ENCODE measurements at regions of chr9 and their contacts with region 1.

Region 1: DNA sequence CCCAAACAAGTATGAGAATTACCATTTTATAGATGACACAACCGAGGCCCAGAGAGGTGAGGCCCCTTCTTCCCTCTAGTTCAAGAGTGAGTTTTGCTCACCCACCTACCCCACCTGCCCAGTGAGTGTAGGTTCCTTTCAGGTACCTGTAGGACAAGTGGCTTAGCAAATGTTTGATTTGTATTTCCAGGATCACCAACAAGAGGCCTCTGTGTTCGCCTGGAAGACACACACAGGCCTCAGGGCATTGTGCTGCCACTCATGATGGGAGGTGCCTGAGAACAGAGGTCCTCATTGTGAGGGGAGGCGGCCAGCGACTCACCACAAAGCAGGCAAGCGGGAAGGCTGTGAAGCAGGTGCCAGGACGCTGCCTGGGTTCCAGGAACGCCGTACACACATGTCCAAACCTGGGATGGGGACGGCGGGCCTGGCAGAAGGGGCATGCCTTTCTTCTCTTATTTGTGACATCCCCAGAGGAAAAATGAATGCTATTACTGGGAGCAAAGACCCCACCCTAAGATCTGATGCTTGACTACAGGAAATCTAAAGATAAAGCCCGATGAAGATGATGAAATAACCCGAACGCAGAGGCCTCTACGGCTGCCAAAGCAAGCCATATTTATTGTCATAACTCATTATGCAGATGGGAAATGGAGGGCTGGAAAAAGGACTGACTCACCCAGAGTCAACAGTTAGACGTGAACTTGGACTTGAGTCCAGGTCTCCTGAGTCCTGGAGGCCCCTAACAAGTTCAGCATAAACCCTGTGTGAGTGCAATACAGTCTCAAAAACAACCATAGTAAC is 60.2 kb upstream of the SLC25A51 start:
- DNase-seq: peak; percentile 92
- H3K4me3 ChIP-seq: no peak overlapping the region
- CTCF ChIP-seq: no peak

Region 2: DNA sequence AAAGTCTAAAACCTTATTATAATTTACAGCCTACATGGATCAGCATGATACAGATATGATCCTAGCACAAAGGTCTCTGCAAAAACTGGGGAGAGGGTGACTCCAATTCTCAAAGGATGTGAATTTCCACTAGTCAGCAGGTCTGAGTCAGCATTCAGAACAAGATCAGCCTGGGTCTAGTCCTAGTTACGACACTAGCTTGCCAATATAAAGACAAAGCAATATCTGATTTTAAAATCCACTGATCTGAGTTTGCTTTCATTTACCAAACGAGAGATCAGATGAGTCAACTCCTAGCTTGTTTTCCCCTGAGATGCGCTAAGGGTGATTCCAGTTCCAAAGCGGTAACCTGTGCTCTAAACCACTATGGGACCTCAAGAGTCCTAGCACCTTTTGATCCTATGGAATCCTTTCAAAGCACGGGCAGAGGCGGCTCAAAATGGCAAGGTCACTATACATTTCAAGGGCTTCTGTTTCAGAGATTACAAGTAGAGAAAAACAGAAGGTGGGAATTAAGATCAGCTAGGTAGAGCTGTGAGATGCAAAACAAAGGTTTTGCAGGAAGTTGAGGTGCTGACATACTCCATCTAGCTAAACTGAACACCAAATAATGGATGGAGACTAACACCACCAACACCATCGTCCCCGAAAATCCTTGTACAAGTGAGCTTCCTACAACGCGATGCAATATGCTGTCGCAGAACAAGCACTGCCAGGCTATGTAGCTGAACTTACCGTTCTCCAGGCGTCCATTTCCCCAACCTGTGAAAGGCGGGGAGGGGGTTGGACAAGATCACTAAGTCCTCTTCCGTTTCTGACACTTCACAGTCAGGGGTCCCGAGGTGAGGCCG is 61.1 kb before region 1 on chr9:
- in situ Hi-C with region 1: no loop called
- DNase-seq: no peak
- H3K4me3 ChIP-seq: peak overlapping the region; percentile 73
- CTCF ChIP-seq: no peak

Region 3: GRCh38 chr9:38017149-38017884 is 53.2 kb after region 1 on chr9:
- in situ Hi-C with region 1: no loop called
- DNase-seq: peak; percentile 80
- H3K4me3 ChIP-seq: no peak overlapping the region
- CTCF ChIP-seq: peak; percentile 6

Region 4: GRCh38 chr9:38068866-38069629 is 104.9 kb after region 1 on chr9 and contains the start of gene SHB:
- in situ Hi-C with region 1: loop called (anchors 10 kb)
- DNase-seq: no peak
- H3K4me3 ChIP-seq: peak within 1 kb of the TSS; percentile 87
- CTCF ChIP-seq: no peak